ENCODE measurements at regions of chr16 and their contacts with region 1.

Region 1: DNA sequence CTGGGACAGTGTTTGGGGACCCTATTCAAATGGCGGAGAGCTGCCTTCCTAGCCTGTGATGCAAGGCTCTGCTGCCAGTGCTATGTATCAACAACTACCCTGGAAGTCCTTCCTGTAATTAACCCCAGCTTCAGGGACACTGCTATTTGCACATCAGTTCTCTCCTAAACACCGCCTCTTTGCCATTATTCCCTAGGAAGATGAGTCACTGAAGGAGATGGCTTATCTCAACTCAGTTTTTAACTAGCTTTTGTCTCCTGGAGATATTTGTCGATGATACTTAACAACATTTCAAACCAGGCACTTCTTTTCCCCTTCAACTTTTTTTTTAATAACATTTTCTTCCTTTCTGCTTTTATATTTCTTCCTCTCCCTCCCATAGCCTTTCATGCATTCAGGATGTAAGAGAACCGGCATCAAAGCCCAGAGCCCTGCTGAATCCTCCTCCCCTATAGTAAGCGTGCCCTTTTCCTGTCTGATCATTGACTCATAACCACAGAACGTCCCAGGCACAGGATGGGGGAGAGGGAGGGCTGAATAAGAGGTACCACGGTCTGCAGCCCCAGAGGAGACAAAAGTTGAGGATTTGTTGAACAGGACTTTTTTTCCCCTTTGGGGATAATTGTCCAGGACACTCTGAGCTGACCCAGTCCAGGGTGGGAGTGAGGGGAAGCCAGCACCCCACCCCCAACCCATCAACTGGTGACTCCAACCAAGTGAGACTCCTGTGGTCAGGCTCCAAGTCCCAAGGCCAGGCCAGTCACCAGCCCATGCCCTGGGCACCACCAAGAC is 387.8 kb upstream of the SALL1 start:
- DNase-seq: peak; percentile 92
- H3K4me3 ChIP-seq: no peak overlapping the region
- H3K27ac ChIP-seq: peak overlapping the region; percentile 33
- H3K4me1 ChIP-seq: peaks cover 29% of the 10 kb centered on the region
- H3K27me3 ChIP-seq: no peaks in the 10 kb centered on the region
- CTCF ChIP-seq: no peak

Region 2: GRCh38 chr16:51255349-51255972 is 283.4 kb before region 1 on chr16:
- CTCF ChIA-PET with region 1: no interaction called
- dilution Hi-C with region 1: no loop called
- in situ Hi-C with region 1: no loop called
- intact Hi-C with region 1: no loop called
- DNase-seq: no peak
- H3K4me3 ChIP-seq: no peak overlapping the region
- H3K27ac ChIP-seq: no peak overlapping the region
- H3K4me1 ChIP-seq: no peaks in the 10 kb centered on the region
- H3K27me3 ChIP-seq: no peaks in the 10 kb centered on the region
- CTCF ChIP-seq: no peak

Region 3: DNA sequence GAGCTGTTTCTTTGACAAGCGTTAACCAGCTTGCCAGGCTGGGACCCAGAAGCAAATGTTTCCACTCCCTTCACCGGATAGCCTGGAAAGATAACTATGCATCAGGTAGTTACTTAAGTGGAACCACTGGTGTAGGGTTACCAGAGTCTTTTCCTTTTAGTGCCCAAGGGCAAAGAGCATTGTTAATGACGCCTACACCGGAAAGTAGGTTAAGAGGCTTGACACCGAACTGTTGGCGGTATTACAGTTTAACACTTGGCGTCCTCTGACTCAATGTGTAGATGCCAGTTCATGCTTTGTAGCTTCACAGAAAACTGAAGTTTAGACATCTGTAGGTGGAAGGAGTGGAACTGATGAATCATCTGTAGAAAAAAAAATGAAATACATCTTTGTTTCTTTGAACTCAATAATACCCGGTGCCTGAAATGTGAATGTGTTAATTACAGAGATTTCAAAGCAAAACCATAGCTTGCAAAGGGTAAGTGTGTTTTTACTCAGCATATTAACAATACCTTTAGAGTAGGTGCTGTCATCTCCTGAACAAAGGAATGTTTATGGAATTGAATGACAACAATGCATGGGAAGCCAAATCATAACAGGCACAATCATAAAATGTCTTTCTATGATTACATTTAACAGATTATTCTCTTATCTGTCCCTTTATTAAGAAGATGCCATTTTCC is 38.9 kb after region 1 on chr16:
- CTCF ChIA-PET with region 1: no interaction called
- dilution Hi-C with region 1: no loop called
- in situ Hi-C with region 1: no loop called
- intact Hi-C with region 1: loop called (anchors 5 kb)
- DNase-seq: peak; percentile 97
- H3K4me3 ChIP-seq: no peak overlapping the region
- H3K27ac ChIP-seq: no peak overlapping the region
- H3K4me1 ChIP-seq: peaks cover 18% of the 10 kb centered on the region
- H3K27me3 ChIP-seq: no peaks in the 10 kb centered on the region
- CTCF ChIP-seq: no peak

Region 4: GRCh38 chr16:51624080-51624775 is 85.3 kb after region 1 on chr16:
- CTCF ChIA-PET with region 1: no interaction called
- dilution Hi-C with region 1: no loop called
- in situ Hi-C with region 1: no loop called
- intact Hi-C with region 1: loop called (anchors 5 kb)
- DNase-seq: peak; percentile 21
- H3K4me3 ChIP-seq: no peak overlapping the region
- H3K27ac ChIP-seq: no peak overlapping the region
- H3K4me1 ChIP-seq: no peaks in the 10 kb centered on the region
- H3K27me3 ChIP-seq: no peaks in the 10 kb centered on the region
- CTCF ChIP-seq: no peak

Region 5: GRCh38 chr16:51636920-51637769 is 98.2 kb after region 1 on chr16:
- CTCF ChIA-PET with region 1: no interaction called
- dilution Hi-C with region 1: no loop called
- in situ Hi-C with region 1: no loop called
- intact Hi-C with region 1: loop called (anchors 5 kb)
- DNase-seq: peak; percentile 89
- H3K4me3 ChIP-seq: peak overlapping the region in 2 of 3 experiments; percentile 7 to 24
- H3K27ac ChIP-seq: peak overlapping the region; percentile 60
- H3K4me1 ChIP-seq: peaks cover 30% of the 10 kb centered on the region
- H3K27me3 ChIP-seq: no peaks in the 10 kb centered on the region
- CTCF ChIP-seq: no peak